Psoas muscle (tissue), 8 donors: ENCODE measurements at regions of chr10 and their contacts with region 1.

Region 1: DNA sequence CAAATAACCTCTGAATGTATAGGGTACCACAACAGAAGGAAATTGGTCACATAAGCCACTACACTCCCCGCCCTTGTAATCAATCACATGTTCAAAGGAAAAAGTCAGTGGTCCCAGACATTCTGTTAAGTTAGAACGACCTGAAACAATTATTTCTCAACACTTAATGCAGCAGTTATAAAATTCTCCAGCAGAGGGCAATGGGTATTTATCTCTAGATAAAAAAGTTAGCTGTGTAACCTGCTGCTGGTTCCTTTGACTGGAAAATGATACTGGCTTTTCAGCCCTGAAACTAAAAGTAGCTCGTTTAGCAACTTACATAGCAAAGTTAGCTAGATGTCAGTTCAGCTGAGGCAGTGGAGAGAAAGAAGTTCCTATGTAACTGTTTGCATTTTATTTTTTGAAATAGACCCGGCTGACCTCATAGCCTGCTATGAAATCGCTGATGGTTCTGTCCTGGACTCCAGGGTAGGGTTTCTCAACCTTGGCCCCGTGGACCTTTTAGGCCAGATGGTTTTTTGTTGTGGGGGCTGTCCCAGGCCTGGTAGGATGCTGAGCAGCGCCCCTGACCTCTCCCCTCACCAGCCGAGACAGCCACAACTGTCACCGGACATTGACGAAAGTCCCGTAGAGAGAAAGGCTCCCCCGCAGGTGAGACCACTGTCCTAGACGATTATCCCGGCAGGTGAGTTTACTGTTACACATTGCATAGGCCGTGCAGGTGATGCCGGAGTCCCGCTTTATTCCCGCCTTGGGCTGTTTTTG is 40.2 kb upstream of the PROSER2 start:
- DNase-seq: no peak
- ATAC-seq: peak in 1 of 4 donors; percentile 63
- H3K4me3 ChIP-seq: no peak overlapping the region
- H3K27ac ChIP-seq: no peak overlapping the region
- H3K4me1 ChIP-seq: no peaks in the 10 kb centered on the region
- H3K27me3 ChIP-seq: no peaks in the 10 kb centered on the region
- CTCF ChIP-seq: peak; percentile 66

Region 2: DNA sequence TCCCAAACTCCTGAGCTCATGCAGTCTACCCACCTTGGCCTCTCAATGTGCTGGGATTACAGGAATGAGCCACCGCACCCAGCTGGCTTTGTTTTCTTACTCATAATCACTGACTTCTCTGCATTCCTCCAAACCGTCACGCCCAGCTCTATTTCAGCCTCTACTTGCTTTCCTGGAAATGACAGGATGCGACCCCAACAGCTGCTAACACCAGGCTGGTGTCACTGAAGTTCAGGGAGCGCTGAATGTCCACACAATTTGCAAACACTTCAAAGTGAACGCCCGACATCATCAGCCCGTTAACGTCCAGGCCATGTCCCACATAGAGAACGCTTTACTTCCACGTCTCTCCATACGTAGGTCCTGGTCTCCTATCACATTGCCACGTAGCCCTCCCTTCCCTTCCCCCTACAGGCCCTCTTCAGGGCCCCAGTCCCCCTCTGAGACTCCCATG is 27.4 kb after region 1 on chr10:
- intact Hi-C with region 1: no loop called
- DNase-seq: no peak
- ATAC-seq: no peak
- H3K4me3 ChIP-seq: no peak overlapping the region
- H3K27ac ChIP-seq: no peak overlapping the region
- H3K4me1 ChIP-seq: no peaks in the 10 kb centered on the region
- H3K27me3 ChIP-seq: peaks cover 0 to 7% (median 2%) of the 10 kb centered on the region in 3 donors
- CTCF ChIP-seq: no peak

Region 3: DNA sequence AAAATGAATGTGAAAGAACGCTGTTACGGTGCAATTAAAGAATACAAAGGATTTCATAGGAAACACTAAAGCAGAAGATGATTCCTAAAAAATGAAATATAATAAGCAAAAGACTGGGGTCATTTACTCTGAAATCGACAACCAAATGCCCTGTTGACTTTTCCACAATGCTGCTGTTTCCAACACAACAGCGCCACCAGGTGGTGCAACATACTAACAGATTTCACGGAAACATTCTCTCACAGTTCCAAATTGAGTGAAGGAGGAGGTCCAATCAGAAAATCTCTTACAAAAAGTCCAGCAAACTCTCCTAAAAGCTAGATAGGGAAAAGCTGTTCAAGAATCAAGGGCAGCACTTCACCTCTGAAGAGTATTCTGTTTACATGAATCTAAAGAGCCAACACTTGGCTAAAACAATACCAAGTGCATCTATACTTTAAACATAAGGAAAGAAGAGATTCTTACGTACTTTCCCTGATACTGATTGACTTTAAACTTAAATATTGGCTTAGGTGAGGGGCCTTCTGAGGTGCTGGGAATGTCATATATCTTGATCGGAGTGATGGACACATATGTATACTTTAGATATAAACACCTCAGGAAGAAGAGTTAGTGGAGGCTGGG is 203.7 kb after region 1 on chr10:
- intact Hi-C with region 1: loop called (anchors 5 to 10 kb)
- DNase-seq: peak; percentile 74 to 79
- ATAC-seq: peak in 2 of 4 donors; percentile 53 to 77
- H3K4me3 ChIP-seq: no peak overlapping the region
- H3K27ac ChIP-seq: no peak overlapping the region
- H3K4me1 ChIP-seq: no peaks in the 10 kb centered on the region
- H3K27me3 ChIP-seq: no peaks in the 10 kb centered on the region
- CTCF ChIP-seq: peak; percentile 73